ENCODE measurements at regions of chr4 and their contacts with region 1.

Region 1: DNA sequence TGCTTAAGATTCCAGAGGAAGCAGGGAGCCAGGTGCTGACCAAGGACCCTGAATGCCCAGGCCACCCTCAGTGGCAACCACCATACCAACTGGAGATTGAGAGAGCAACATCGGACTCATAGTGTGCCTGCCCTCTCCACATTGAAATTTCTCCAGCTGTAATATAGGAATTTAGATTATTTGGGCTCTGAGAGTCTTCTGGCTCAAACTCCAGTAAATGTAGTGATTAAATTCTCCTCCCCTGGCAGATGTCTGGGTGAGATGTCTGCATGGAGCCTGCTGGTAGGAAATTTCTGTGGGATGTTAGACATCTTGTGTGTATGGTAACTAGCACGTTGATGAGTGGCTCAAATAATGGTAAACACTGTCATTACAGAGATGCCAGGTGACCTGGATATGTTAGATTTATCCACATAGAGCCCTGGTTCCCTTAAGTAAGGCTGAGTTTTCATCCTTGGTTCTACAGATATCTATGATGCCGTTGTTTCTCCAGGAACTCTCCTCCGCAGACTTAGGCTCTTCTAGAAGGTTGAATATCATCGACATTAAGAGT is 70.6 kb downstream of the CLNK start:
- DNase-seq: no peak
- ATAC-seq: no peak
- H3K4me3 ChIP-seq: no peak overlapping the region
- H3K27ac ChIP-seq: no peak overlapping the region
- H3K4me1 ChIP-seq: no peaks in the 10 kb centered on the region
- H3K27me3 ChIP-seq: no peaks in the 10 kb centered on the region
- CTCF ChIP-seq: no peak

Region 2: DNA sequence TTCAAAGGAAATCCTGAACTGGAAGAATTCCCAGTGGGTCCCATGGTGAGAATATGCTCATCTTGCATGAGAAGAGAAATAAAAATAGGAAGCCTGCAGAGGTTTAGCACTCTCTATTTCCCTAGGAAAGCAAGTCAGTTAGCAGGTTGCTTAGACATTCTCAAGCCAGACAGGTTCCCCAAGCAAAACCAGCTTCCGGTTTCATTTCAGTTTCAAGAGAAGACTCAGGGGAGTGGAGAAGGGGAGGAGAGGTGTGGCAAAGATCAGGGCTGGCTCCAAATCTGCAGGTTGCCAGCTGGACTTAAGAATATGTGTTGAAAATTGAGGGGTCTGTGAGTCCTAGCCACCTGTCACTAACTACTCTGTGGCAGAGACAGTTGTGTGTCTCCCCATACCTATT is 37.0 kb before region 1 on chr4:
- CTCF ChIA-PET with region 1: no interaction called
- POLR2A ChIA-PET with region 1: no interaction called
- in situ Hi-C with region 1: no loop called
- intact Hi-C with region 1: loop called (anchors 2 kb)
- DNase-seq: no peak
- ATAC-seq: no peak
- H3K4me3 ChIP-seq: no peak overlapping the region
- H3K27ac ChIP-seq: no peak overlapping the region
- H3K4me1 ChIP-seq: no peaks in the 10 kb centered on the region
- H3K27me3 ChIP-seq: no peaks in the 10 kb centered on the region
- CTCF ChIP-seq: no peak

Measured in Panc1 (cell line).